ENCODE measurements at regions of chr19 and their contacts with region 1.

Region 1: DNA sequence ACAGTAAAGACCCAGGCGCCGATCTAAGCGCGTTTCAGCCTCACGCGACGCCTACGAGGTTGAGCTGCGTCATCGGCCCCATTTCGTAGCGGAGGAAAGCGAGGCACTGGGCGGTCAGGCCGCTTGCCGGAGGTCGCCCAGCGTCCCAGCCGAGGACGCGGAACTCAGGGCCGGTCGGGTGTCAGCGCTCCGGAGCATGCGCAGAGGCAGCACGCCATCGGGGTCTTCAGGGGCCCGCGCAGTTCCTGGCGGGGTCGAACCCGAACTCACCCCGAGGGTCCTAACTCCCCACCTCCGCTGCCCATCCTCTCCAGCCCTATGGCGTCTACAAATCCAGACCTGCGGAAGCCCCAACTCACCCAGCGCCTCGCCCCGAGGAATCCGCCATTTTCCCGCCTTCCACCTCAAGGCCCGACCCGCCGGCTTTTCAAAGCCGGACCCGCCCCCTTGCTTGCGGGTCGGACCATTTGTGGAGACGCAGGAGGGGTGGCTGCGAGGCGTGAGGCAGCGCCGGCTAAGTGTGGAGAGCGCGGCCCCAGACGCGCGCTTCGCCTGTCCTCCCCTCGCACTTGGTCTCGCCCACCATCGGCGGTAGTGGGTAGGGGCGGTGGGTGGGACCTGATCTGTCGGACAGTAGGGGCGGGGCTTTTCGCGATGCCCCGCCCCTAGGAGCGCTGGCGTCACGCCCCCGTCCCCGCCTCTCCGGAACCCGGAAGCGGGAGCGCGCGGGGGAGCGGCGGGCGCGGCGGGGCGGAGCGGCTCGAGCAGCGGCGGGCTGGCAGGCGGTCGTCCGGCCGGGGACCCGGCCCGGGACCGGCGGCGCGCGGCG is at the starts of genes HAUS8 and MYO9B:
- DNase-seq: peak; percentile 100
- H3K4me3 Mint-ChIP-seq: peak within 1 kb of the TSS; percentile 99
- H3K27ac Mint-ChIP-seq: peak within 1 kb of the TSS; percentile 94
- H3K4me1 Mint-ChIP-seq: peaks cover 59% of the 10 kb centered on the region
- H3K27me3 Mint-ChIP-seq: no peaks in the 10 kb centered on the region
- total RNA-seq, gene HAUS8: 37.0 to 40.6 TPM
- total RNA-seq, gene MYO9B: 190 to 203 TPM

Region 2: DNA sequence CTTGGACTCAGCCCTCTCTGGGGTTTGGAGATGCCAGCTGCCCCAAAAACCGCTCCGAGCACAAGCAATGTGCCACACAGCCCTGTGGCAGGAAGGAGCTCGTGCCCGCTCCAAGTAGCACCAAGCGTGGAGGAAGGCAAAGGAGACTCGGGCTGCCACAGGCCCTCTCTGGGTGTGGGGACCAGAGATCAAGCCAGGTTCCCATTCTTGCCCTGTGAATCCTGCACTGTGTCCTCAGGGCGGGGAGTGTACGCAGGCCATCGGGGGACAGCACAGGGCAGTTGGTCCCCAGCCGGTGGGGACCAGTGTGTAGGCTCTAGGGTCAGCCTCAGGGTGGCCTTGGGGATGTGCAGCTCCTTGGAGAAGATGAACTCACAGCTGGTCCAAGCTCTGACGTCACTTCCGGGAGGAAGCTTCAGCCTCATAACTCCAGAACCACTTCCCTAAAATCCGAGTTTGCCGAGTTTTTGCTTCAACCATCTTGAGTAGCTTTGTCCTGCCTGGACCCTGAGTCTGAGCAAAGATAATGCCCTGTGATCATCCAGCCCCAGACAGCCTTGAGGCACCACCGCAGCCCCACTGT is 39.3 kb before region 1 on chr19:
- CTCF ChIA-PET with region 1: no interaction called
- POLR2A ChIA-PET with region 1: no interaction called
- DNase-seq: no peak
- H3K4me3 Mint-ChIP-seq: no peak overlapping the region
- H3K27ac Mint-ChIP-seq: no peak overlapping the region
- H3K4me1 Mint-ChIP-seq: no peaks in the 10 kb centered on the region
- H3K27me3 Mint-ChIP-seq: no peaks in the 10 kb centered on the region

Region 3: DNA sequence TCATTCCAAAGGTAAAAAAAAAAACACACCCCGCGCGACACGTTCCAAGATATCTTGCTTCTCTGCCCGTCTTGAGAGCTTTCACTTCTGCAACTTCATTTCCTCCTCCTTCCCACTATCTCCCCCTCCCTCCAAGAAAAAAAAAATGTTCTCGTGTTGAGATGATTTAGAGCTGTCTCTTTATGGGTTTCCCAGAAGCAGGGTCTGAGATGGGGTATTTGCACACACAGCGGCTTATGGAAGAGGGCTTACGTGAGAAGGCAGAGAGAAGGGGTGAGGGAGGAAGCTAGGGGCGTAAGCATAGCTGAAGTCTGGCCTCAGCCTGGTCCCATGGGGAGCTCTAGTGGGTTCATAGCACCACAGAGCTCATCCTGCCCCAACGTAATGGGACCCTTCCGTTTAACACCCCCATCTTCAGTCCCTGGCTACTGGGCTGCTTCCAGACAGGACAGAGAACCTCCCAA is 108.6 kb after region 1 on chr19:
- CTCF ChIA-PET with region 1: interaction called, 6 read pairs
- POLR2A ChIA-PET with region 1: interaction called, 18 read pairs
- DNase-seq: peak; percentile 45
- H3K4me3 Mint-ChIP-seq: peak overlapping the region; percentile 73
- H3K27ac Mint-ChIP-seq: peak overlapping the region; percentile 97
- H3K4me1 Mint-ChIP-seq: peaks cover 34% of the 10 kb centered on the region
- H3K27me3 Mint-ChIP-seq: no peaks in the 10 kb centered on the region